Aorta (tissue), 5 donors: ENCODE measurements at regions of chr2 and their contacts with region 1.

Region 1: DNA sequence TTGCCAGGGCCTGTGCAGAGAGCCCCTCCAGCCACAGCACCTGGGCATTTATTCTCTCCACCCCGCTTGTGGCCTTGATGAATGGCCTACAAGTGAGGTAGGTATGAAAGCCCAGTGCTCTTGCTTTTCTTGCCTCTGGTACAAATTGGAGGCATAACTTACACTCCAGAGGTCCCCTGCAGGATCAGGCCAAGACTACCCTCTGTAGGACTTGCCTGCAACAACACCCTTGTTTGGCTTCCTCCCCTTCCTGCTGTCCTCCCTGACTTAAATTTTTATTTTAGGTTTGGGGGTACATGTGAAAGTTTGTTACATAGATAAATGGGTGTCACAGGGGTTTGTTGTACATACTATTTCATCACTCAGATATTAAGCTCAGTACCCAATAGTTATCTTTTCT is 95.7 kb downstream of the CDC42EP3 start:
- DNase-seq: no peak
- ATAC-seq: no peak
- H3K4me3 ChIP-seq: no peak overlapping the region
- H3K27ac ChIP-seq: no peak overlapping the region
- H3K4me1 ChIP-seq: peaks cover 0 to 2% of the 10 kb centered on the region in 2 donors
- H3K27me3 ChIP-seq: no peaks in the 10 kb centered on the region

Region 2: DNA sequence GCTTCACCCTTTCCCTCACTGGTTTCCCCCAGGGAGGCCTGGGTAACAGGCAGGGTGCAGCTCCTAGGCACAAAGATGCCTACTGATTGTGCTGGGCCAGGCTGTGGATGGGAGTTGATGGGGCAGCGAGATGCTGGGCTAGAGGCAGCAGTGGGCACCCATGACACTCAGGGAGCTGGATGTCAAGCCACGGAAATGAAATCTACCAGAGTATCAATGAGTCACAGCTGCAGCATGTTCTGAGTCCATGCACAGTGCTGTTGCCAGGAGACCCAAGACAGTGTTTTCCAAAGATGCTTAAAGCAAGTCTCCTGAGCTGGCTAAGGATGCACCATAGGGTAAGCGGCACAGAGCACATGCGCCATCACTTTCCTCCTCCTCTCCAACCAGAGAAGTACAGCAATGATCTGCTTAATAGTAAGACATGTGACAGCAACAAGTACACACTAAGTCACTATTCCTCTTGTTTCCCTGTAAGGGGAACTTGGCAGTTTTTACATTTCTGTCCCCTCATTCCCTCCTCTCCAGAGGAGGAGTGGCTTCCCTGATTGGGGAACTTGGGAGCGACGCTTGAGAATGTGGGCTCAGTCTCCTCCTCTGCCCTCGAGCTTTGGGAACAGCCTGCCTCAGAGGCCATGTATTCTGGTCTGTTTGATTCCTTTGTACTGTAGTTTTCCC is 38.4 kb after region 1 on chr2:
- intact Hi-C with region 1: loop called in 1 of 2 experiments (anchors 5 kb)
- DNase-seq: peak; percentile 67 to 77
- ATAC-seq: peak; percentile 19
- H3K4me3 ChIP-seq: no peak overlapping the region
- H3K27ac ChIP-seq: peak overlapping the region in 1 of 2 donors; percentile 13
- H3K4me1 ChIP-seq: peaks cover 4 to 17% of the 10 kb centered on the region in 2 donors
- H3K27me3 ChIP-seq: no peaks in the 10 kb centered on the region